ENCODE measurements at regions of chr6 and their contacts with region 1.

Region 1: DNA sequence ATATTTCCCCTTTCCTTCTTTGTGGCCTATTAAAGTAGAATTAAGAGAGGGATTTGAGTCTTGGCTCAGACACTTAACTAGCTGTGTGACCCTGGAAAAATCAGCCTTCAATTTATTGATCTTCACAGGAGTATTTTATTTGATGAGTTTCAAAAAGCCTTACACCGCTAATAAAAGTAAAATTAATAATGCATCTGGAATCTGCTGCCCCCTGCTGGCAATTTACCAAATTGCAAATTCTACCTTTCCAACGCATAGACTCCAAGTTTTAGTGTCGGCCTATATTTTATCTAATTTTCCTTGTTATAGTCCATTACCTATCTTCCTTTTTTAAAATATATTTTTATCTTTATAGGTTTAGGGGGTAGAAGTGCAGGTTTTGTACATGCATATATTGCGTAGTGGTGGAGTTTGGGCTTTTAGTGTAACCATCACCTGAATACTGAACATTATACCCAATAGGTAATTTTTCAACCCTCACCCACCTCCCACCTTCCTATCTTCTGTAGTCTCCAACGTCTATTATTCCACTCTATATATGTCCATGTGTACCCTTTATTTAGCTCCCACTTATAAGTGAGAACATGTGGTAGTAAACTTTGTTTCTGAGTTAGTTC is 46.3 kb downstream of the GOPC start:
- DNase-seq: no peak
- H3K4me3 ChIP-seq: no peak overlapping the region
- H3K27ac ChIP-seq: no peak overlapping the region
- H3K4me1 ChIP-seq: no peaks in the 10 kb centered on the region
- H3K27me3 ChIP-seq: no peaks in the 10 kb centered on the region
- CTCF ChIP-seq: peak in 3 of 4 experiments; percentile 52 to 85 (median 70)
- EP300 ChIP-seq: no peak
- POLR2A ChIP-seq: no peak

Region 2: GRCh38 chr6:117072134-117072533 is 483.9 kb before region 1 on chr6:
- intact Hi-C with region 1: no loop called
- DNase-seq: no peak
- H3K4me3 ChIP-seq: no peak overlapping the region
- H3K27ac ChIP-seq: no peak overlapping the region
- H3K4me1 ChIP-seq: no peaks in the 10 kb centered on the region
- H3K27me3 ChIP-seq: peaks cover 0 to 4% (median 0%) of the 10 kb centered on the region in 3 donors
- CTCF ChIP-seq: no peak
- EP300 ChIP-seq: no peak
- POLR2A ChIP-seq: no peak

Region 3: GRCh38 chr6:117346142-117346930 is 209.7 kb before region 1 on chr6:
- intact Hi-C with region 1: loop called (anchors 5 kb)
- DNase-seq: no peak
- H3K4me3 ChIP-seq: no peak overlapping the region
- H3K27ac ChIP-seq: no peak overlapping the region
- H3K4me1 ChIP-seq: no peaks in the 10 kb centered on the region
- H3K27me3 ChIP-seq: no peaks in the 10 kb centered on the region
- CTCF ChIP-seq: peak in 2 of 4 experiments; percentile 18 to 48
- EP300 ChIP-seq: no peak
- POLR2A ChIP-seq: no peak

Region 4: DNA sequence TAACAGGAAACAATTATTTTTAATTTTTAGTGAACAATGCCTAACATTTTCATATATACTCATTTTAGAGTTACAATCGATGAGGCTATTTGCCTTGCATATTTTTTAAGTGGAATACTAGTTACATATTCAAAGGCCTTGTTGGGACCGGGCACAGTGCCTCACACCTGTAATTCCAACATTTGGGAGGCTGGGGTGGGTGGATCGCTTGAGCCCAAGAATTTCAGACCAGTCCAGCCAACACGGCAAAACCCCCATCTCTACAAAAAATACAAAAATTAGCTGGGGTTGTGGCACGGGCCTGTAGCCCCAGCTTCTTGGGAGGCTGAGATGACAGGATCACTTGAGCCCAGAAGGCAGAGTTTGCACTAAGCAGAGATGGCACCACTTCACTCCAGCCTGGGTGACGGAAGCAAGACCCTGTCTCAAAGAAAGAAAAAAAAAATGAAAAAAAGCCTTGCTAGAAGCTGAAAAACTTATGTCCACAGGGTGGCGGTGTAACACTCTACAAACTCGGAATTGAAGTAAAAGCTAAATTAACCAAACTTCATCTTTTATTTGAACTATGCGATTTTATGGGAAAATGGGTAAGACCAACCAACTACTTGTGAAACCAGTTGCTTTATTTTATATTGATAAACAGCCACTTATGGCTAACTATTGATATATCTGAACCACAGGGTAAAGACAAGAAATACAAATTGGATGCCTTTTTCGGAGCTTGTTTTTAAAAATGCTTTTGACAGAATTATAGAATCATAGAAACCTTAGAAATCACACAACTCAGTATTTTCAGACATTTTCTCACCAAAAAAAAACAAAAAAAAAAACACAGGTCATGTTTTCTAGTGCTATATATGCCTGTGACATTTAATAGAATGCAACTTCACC is 106.2 kb before region 1 on chr6:
- intact Hi-C with region 1: loop called (anchors 1 kb)
- DNase-seq: no peak
- H3K4me3 ChIP-seq: no peak overlapping the region
- H3K27ac ChIP-seq: no peak overlapping the region
- H3K4me1 ChIP-seq: peaks cover 0 to 16% (median 0%) of the 10 kb centered on the region in 4 donors
- H3K27me3 ChIP-seq: peaks cover 0 to 14% (median 0%) of the 10 kb centered on the region in 3 donors
- CTCF ChIP-seq: peak; percentile 22 to 79 (median 53)
- EP300 ChIP-seq: no peak
- POLR2A ChIP-seq: no peak

Measured in sigmoid colon (tissue), 7 donors.